ENCODE measurements at regions of chr16 and their contacts with region 1.

Region 1: GRCh38 chr16:87059994-87060986 is 256.9 kb downstream of the C16orf95 start:
- DNase-seq: no peak
- ATAC-seq: no peak
- H3K4me3 ChIP-seq: no peak overlapping the region
- H3K27ac ChIP-seq: no peak overlapping the region
- H3K4me1 ChIP-seq: peaks cover 10% of the 10 kb centered on the region
- H3K27me3 ChIP-seq: no peaks in the 10 kb centered on the region
- CTCF ChIP-seq: no peak
- POLR2A ChIP-seq: no peak

Region 2: GRCh38 chr16:87263471-87263961 is 203.2 kb after region 1 on chr16:
- intact Hi-C with region 1: loop called (anchors 10 kb)
- DNase-seq: no peak
- ATAC-seq: no peak
- H3K4me3 ChIP-seq: no peak overlapping the region
- H3K27ac ChIP-seq: no peak overlapping the region
- H3K4me1 ChIP-seq: no peaks in the 10 kb centered on the region
- H3K27me3 ChIP-seq: no peaks in the 10 kb centered on the region
- CTCF ChIP-seq: no peak
- POLR2A ChIP-seq: no peak